Gastrocnemius medialis (tissue), 4 donors: ENCODE measurements at regions of chr5 and their contacts with region 1.

Region 1: DNA sequence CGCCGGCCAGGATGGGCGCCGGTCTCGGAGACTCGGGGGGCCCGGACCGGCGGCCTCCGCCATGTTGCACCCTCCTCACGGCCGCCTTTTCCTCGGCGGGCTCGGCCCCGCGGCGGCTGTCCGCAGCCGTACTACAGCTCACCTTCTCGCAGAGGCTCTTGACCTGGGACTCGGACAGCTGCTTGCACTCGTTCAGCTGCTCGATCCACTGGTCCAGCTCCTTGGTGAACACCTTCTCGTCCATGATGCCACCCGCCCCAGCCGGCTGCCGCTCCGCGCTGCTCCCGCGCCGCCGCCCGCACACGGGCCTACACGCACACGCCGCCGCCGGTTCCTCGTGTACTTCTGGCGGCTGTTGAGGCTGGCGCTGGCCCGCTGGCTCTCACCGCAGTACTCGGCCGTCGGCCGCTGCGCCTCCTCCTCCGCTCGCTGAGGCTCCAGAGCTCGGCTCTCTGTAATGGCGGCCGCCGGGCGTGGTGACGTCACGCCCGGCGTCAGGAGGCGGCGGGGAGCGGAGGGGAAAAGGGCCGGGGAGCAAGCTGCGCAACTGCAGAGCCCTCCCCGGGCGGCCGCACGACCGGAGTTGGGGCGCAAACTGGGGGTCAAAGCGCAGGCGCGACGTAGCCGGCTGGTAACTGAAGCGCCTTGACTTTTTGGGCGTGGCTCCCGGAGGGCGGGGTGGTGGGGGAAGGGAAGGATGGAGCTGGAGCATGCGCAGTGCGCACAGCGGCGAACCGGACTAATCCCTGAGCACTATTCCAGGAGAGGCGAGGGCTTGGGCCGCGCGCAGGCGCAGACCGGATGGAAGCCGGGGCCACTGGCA is at the start of gene PPP2CA:
- DNase-seq: peak; percentile 97 to 99
- ATAC-seq: peak; percentile 87 to 88
- H3K4me3 ChIP-seq: peak within 1 kb of the TSS; percentile 67 to 93 (median 86)
- H3K27ac ChIP-seq: peak within 1 kb of the TSS; percentile 95 to 100 (median 99)
- H3K4me1 ChIP-seq: peaks cover 44 to 54% of the 10 kb centered on the region in 2 donors
- H3K27me3 ChIP-seq: no peaks in the 10 kb centered on the region
- CTCF ChIP-seq: no peak
- POLR2A ChIP-seq: peak; percentile 93 to 96
- total RNA-seq, gene PPP2CA: 90.2 to 179 (median 155) TPM

Region 2: DNA sequence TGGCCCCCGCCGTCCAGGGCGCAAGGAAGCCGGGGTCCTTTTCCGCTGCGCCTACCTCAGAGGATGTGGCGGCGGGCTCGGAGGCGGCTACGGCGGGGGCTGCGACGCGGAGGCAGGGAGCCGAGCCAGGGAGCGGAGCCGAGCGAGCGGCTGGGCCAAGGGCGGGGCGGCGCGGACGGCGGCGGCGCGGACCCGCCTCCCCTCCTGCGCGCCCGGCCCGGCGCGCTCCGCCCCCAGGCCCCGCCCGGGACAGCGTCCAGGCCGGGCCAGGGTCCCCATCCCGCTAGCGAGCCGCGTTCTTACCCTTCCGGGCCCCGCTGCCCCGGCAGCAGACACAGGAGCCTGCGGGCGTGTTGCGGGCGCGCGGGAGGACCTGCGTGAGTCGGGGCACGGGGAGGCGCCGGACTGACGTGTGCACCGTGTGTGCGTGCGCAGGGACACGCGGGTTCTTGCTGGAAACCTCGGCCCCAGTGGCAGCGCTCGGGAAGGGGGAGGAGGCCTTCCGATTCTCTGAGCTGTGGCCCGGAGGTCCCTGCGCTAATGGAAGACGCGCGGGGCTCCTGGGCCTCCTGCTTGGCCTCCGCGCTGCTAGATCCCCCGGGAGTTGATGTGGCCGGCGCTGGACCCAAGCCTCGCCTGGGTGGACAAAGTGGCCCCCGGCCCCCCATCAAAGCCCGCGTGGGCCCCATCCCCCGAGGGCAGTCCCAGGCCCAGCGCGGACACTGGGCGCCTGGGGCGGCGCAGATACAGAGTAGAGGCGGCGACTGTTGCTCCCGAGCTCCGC is 221.0 kb before region 1 on chr5 and contains the start of gene VDAC1:
- in situ Hi-C with region 1: no loop called
- intact Hi-C with region 1: loop called (anchors 5 kb)
- DNase-seq: peak; percentile 67 to 78
- ATAC-seq: peak; percentile 66 to 76
- H3K4me3 ChIP-seq: peak within 1 kb of the TSS; percentile 72 to 96 (median 84)
- H3K27ac ChIP-seq: peak within 1 kb of the TSS; percentile 91 to 100 (median 98)
- H3K4me1 ChIP-seq: peaks cover 46 to 51% of the 10 kb centered on the region in 2 donors
- H3K27me3 ChIP-seq: no peaks in the 10 kb centered on the region
- CTCF ChIP-seq: no peak
- POLR2A ChIP-seq: peak; percentile 85
- total RNA-seq, gene VDAC1: 412 to 611 (median 495) TPM

Region 3: DNA sequence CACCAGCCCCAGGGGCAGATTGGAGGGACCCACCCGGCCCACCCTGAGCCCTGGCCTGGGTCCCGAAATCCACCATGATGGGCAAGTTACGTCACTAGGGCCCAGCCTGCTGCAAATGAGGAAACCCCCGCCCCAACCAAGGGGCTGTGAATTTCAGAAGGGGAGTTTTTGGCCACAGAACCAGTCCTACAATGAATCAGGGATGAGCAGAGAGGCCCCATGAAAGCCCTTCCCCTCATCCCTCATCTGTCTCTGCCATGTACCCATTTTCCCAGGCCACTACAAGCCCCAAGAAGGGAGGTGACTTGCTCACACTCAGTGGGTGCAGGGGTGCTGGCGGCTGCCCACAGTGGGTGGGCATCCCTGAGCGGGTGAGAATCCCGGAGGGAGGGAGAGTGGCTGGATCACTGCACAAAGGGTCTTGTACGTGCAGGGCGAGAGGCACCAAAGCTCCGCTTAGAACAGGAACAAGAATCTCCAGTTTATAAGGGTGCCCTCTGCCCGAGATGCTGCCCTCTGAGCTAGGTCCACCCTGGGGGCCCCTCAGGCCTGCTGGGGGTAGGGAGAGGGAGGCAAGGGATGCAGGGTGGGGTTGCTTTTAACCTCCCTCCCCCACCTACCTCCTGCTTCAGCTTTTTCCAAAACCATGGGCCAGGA is 121.7 kb before region 1 on chr5:
- in situ Hi-C with region 1: no loop called
- intact Hi-C with region 1: no loop called
- DNase-seq: no peak
- ATAC-seq: no peak
- H3K4me3 ChIP-seq: no peak overlapping the region
- H3K27ac ChIP-seq: no peak overlapping the region
- H3K4me1 ChIP-seq: no peaks in the 10 kb centered on the region
- H3K27me3 ChIP-seq: no peaks in the 10 kb centered on the region
- CTCF ChIP-seq: no peak
- POLR2A ChIP-seq: no peak

Region 4: GRCh38 chr5:134114886-134115805 is 110.7 kb before region 1 on chr5:
- in situ Hi-C with region 1: no loop called
- intact Hi-C with region 1: no loop called
- DNase-seq: no peak
- ATAC-seq: peak; percentile 9 to 13
- H3K4me3 ChIP-seq: peak overlapping the region; percentile 35 to 65 (median 52)
- H3K27ac ChIP-seq: no peak overlapping the region
- H3K4me1 ChIP-seq: peaks cover 9 to 19% of the 10 kb centered on the region in 2 donors
- H3K27me3 ChIP-seq: peaks cover 9 to 19% (median 16%) of the 10 kb centered on the region in 3 donors
- CTCF ChIP-seq: no peak
- POLR2A ChIP-seq: no peak

Region 5: GRCh38 chr5:134176511-134177368 is 49.1 kb before region 1 on chr5 and contains the start of gene SKP1:
- in situ Hi-C with region 1: no loop called
- intact Hi-C with region 1: loop called (anchors 1 kb)
- DNase-seq: peak; percentile 68 to 77
- ATAC-seq: peak; percentile 72 to 76
- H3K4me3 ChIP-seq: peak within 1 kb of the TSS; percentile 96 to 99 (median 98)
- H3K27ac ChIP-seq: peak within 1 kb of the TSS; percentile 93 to 99 (median 96)
- H3K4me1 ChIP-seq: peaks cover 45 to 46% of the 10 kb centered on the region in 2 donors
- H3K27me3 ChIP-seq: no peaks in the 10 kb centered on the region
- CTCF ChIP-seq: no peak
- POLR2A ChIP-seq: peak; percentile 96 to 97
- total RNA-seq, gene SKP1: 318 to 499 (median 476) TPM

Region 6: DNA sequence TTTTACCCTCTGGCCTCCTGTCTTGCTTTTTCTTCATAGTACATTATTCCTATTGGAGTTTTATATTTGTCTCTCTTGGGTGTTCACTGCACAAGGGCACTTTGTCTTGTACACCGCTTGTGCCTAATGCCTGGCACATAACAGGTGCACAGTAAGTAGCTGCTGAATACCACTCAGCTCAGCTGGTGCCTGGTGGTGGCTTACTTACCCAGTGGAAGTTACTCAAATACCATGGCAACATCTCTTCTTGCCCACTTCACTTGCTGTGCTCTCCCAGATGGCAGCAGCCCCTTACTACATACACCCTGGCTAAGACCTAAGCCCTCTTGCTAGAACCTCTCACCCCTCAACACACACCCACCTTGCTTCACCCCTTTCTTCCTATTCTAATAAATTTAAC is 37.7 kb before region 1 on chr5:
- in situ Hi-C with region 1: no loop called
- intact Hi-C with region 1: no loop called
- DNase-seq: no peak
- ATAC-seq: no peak
- H3K4me3 ChIP-seq: no peak overlapping the region
- H3K27ac ChIP-seq: no peak overlapping the region
- H3K4me1 ChIP-seq: no peaks in the 10 kb centered on the region
- H3K27me3 ChIP-seq: no peaks in the 10 kb centered on the region
- CTCF ChIP-seq: no peak
- POLR2A ChIP-seq: no peak

Region 7: DNA sequence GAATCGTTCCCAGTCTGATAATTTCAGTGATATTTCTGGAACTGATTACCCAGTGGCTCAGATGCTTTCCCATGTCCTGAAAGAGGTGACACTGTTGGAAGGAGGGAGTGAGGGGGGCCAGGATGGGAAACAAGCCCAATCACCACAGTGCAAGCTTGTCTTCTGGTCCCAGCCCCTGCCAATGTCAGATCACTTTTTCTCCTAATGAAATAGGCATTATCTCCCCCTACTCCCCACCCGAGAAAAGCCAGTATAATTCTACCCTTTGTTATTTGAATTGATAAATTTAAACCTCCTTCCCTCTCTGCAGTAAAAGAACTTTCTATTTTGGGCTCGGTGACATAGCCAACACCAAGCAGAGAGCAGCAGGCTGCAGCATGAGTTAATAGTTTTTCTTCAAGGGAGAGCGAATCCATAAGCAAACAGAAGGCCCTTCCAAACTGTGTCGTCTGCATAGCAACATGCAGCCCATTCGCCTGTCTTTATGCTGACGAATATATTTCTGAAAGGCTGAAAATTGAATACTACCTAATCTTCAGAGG is 14.7 kb after region 1 on chr5:
- in situ Hi-C with region 1: no loop called
- intact Hi-C with region 1: loop called (anchors 2 kb)
- DNase-seq: no peak
- ATAC-seq: peak; percentile 21 to 34
- H3K4me3 ChIP-seq: peak overlapping the region in 1 of 4 donors; percentile 3
- H3K27ac ChIP-seq: peak overlapping the region; percentile 79 to 82 (median 81)
- H3K4me1 ChIP-seq: peaks cover 43 to 47% of the 10 kb centered on the region in 2 donors
- H3K27me3 ChIP-seq: no peaks in the 10 kb centered on the region
- CTCF ChIP-seq: no peak
- POLR2A ChIP-seq: no peak

Region 8: GRCh38 chr5:134289509-134290113 is 63.8 kb after region 1 on chr5:
- in situ Hi-C with region 1: no loop called
- intact Hi-C with region 1: loop called (anchors 2 kb)
- DNase-seq: peak; percentile 30 to 39
- ATAC-seq: peak; percentile 92 to 99
- H3K4me3 ChIP-seq: no peak overlapping the region
- H3K27ac ChIP-seq: no peak overlapping the region
- H3K4me1 ChIP-seq: no peaks in the 10 kb centered on the region
- H3K27me3 ChIP-seq: no peaks in the 10 kb centered on the region
- CTCF ChIP-seq: peak; percentile 65 to 83 (median 68)
- POLR2A ChIP-seq: no peak

Region 9: DNA sequence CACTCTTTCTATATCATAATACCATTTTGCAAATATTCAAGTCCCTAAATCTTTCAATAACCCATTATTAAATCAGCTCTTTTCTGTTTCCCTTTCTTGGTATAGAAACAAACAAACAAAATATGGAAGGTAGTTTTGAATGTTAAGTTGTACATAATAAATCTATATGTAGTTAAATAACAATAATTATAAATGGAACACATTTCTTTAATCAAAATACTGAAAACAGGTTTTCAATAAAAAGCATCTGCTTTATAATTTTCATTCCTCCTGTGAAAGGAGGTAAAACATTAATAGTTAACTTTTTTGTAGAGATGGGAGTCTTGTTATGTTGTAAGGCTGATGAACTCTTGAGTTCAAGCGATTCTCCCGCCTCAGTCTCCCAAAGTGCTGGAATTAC is 87.0 kb after region 1 on chr5:
- in situ Hi-C with region 1: no loop called
- intact Hi-C with region 1: no loop called
- DNase-seq: no peak
- ATAC-seq: no peak
- H3K4me3 ChIP-seq: no peak overlapping the region
- H3K27ac ChIP-seq: no peak overlapping the region
- H3K4me1 ChIP-seq: no peaks in the 10 kb centered on the region
- H3K27me3 ChIP-seq: no peaks in the 10 kb centered on the region
- CTCF ChIP-seq: no peak
- POLR2A ChIP-seq: no peak

Region 10: GRCh38 chr5:134365604-134366003 is 139.8 kb after region 1 on chr5:
- in situ Hi-C with region 1: no loop called
- intact Hi-C with region 1: loop called (anchors 1 kb)
- DNase-seq: no peak
- ATAC-seq: no peak
- H3K4me3 ChIP-seq: no peak overlapping the region
- H3K27ac ChIP-seq: no peak overlapping the region
- H3K4me1 ChIP-seq: peaks cover 32 to 33% of the 10 kb centered on the region in 2 donors
- H3K27me3 ChIP-seq: no peaks in the 10 kb centered on the region
- CTCF ChIP-seq: no peak
- POLR2A ChIP-seq: no peak

Region 11: GRCh38 chr5:134648425-134649162 is 422.8 kb after region 1 on chr5 and contains the start of gene SEC24A:
- in situ Hi-C with region 1: no loop called
- intact Hi-C with region 1: loop called (anchors 5 kb)
- DNase-seq: peak; percentile 94 to 97
- ATAC-seq: peak; percentile 88
- H3K4me3 ChIP-seq: peak within 1 kb of the TSS; percentile 90 to 100 (median 94)
- H3K27ac ChIP-seq: peak within 1 kb of the TSS; percentile 98 to 100 (median 98)
- H3K4me1 ChIP-seq: peaks cover 23 to 35% of the 10 kb centered on the region in 2 donors
- H3K27me3 ChIP-seq: no peaks in the 10 kb centered on the region
- CTCF ChIP-seq: no peak
- POLR2A ChIP-seq: peak; percentile 80 to 86
- total RNA-seq, gene SEC24A: 11.4 to 18.3 (median 13.6) TPM